PC-3 (cell line): ENCODE measurements at regions of chr2 and their contacts with region 1.

Region 1: DNA sequence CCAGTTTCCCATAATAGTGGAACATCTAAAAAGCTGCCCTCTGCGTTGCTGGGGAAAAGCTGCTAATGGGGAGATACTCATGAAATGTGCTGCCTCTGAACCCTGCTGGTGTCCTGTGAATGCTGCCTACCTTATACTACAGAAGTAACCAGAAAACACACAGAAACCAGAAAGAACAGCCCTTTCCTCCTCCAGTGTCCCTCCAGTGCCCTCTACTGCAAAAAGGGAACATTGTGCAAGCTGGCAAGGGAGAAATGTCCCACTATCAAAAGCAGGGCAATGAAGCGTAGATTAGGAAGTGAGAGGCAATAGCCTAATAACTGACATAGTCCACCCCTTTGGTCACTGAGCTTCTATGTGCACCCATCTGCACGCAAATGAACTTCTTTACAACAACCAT is 162.7 kb upstream of the ETAA1 start:
- DNase-seq: peak; percentile 51
- ATAC-seq: peak; percentile 56; the same call in 1 of the 2 replicates
- H3K4me3 ChIP-seq: no peak overlapping the region
- H3K27ac ChIP-seq: no peak overlapping the region
- H3K4me1 ChIP-seq: no peaks in the 10 kb centered on the region
- H3K27me3 ChIP-seq: no peaks in the 10 kb centered on the region
- CTCF ChIP-seq: peak; percentile 62

Region 2: DNA sequence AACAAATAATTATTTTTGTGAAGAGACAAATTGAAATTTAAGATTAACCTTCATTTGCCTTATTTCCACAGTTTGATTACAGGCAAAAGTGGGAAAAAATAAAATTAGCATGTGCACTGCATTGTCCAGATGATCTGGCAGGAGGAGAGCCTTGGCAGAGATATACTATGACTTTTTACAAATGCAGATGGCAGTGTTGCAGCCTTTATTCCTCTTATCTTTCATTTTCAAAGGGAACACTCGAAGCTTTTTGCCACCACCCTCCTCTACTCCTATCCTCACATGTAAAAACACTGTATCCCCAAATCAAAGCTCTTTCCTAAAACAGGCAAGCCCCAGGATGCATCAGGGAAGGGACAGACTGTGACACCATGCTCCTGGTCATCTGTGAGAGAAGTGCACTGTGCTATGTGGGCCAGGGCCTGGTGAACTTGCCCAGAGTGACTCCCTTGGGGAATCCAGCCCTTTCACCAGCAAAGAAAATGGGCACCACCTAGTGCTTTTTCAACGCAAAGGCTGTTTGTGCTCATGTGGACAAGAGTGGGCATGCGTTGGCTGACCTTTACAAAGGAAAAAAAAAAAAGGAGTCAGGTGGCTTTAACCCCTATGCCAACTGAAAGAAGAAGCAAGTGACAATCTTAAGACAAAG is 88.0 kb after region 1 on chr2:
- CTCF ChIA-PET with region 1: no interaction called
- POLR2A ChIA-PET with region 1: no interaction called
- intact Hi-C with region 1: loop called (anchors 1 kb)
- DNase-seq: peak; percentile 79
- ATAC-seq: peak; percentile 93
- H3K4me3 ChIP-seq: no peak overlapping the region
- H3K27ac ChIP-seq: peak overlapping the region; percentile 44
- H3K4me1 ChIP-seq: no peaks in the 10 kb centered on the region; the same call in 1 of the 2 replicates
- H3K27me3 ChIP-seq: no peaks in the 10 kb centered on the region
- CTCF ChIP-seq: peak; percentile 88